ENCODE measurements at regions of chr7 and their contacts with region 1.

Region 1: GRCh38 chr7:105656903-105657521 is 75.7 kb upstream of the EFCAB10 start:
- DNase-seq: peak; percentile 37 to 84 (median 66)
- ATAC-seq: peak; percentile 50 to 76 (median 60)
- H3K4me3 ChIP-seq: no peak overlapping the region
- H3K4me3 Mint-ChIP-seq: no peak overlapping the region
- H3K27ac ChIP-seq: no peak overlapping the region
- H3K27ac Mint-ChIP-seq: no peak overlapping the region
- H3K4me1 ChIP-seq: no peaks in the 10 kb centered on the region
- H3K4me1 Mint-ChIP-seq: peaks cover 6 to 12% (median 7%) of the 10 kb centered on the region in 3 donors
- H3K27me3 ChIP-seq: no peaks in the 10 kb centered on the region
- H3K27me3 Mint-ChIP-seq: no peaks in the 10 kb centered on the region

Region 2: DNA sequence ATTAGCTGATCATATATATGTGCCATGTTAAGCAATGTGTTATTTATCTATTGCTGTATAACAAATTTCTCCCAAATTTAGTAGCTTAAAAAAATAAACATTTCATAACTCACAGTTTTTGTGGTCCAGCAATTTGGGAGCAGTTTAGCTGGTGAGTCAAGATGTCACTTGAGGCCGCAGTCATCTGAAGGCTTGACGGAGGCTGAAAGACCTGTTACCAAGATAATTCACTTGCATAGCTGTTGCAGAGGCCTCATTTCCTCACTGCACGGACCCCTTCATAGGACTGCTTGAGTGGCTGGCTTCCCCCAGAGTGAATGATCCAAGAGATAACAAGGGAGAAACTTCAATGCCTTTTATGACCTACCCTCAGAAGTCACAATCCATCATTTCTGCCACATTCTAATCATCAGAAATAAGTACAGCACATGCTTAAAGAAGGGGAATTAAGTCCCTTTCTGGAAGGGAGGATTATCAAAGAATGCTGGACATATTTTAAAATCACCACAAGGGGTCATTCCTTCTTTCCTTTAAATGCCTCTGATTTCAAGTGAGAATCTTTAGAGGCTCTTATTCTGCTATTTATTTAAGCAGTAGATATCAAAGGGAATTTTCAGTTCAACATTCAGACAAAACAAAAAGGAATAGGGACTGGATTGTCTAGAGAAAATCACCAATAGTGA is 257.8 kb before region 1 on chr7:
- CTCF ChIA-PET with region 1: no interaction called
- POLR2A ChIA-PET with region 1: no interaction called
- DNase-seq: no peak
- ATAC-seq: no peak
- H3K4me3 ChIP-seq: no peak overlapping the region
- H3K4me3 Mint-ChIP-seq: no peak overlapping the region
- H3K27ac ChIP-seq: no peak overlapping the region
- H3K27ac Mint-ChIP-seq: no peak overlapping the region
- H3K4me1 ChIP-seq: no peaks in the 10 kb centered on the region
- H3K4me1 Mint-ChIP-seq: peaks cover 2 to 6% (median 3%) of the 10 kb centered on the region in 3 donors
- H3K27me3 ChIP-seq: no peaks in the 10 kb centered on the region
- H3K27me3 Mint-ChIP-seq: no peaks in the 10 kb centered on the region

Region 3: DNA sequence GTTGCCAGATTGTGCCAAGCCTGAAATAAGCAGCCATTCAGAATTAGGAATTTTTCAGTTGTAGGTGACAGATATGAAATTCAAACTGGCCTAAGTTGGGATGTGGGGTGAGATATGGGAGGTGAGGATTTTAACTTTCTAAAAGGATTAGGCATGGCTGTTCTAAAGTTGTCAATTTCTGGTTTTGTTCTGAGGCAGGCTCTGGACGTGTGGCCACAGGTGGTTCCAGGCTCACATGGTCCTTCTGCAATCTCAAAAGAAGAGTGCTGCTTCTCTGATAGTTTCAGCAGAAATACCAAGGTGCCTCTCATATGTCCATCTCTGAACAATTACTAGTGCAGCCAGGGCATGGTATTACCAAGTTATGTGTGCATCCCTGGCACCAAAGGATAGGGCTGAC is 97.1 kb before region 1 on chr7:
- CTCF ChIA-PET with region 1: no interaction called
- POLR2A ChIA-PET with region 1: no interaction called
- DNase-seq: no peak
- ATAC-seq: no peak
- H3K4me3 ChIP-seq: no peak overlapping the region
- H3K4me3 Mint-ChIP-seq: no peak overlapping the region
- H3K27ac ChIP-seq: no peak overlapping the region
- H3K27ac Mint-ChIP-seq: no peak overlapping the region
- H3K4me1 ChIP-seq: no peaks in the 10 kb centered on the region
- H3K4me1 Mint-ChIP-seq: no peaks in the 10 kb centered on the region
- H3K27me3 ChIP-seq: no peaks in the 10 kb centered on the region
- H3K27me3 Mint-ChIP-seq: no peaks in the 10 kb centered on the region

Region 4: GRCh38 chr7:105691733-105692564 is 34.9 kb after region 1 on chr7:
- CTCF ChIA-PET with region 1: interaction called in 1 of 2 experiments, 4 read pairs
- POLR2A ChIA-PET with region 1: interaction called in 1 of 2 experiments, 16 read pairs
- DNase-seq: peak; percentile 36 to 93 (median 86)
- ATAC-seq: peak; percentile 64 to 86 (median 74)
- H3K4me3 ChIP-seq: peak overlapping the region; percentile 78 to 86
- H3K4me3 Mint-ChIP-seq: peak overlapping the region; percentile 92 to 97 (median 96)
- H3K27ac ChIP-seq: peak overlapping the region; percentile 98
- H3K27ac Mint-ChIP-seq: peak overlapping the region; percentile 99 to 100
- H3K4me1 ChIP-seq: peaks cover 2 to 41% of the 10 kb centered on the region in 2 experiments
- H3K4me1 Mint-ChIP-seq: peaks cover 64 to 71% (median 68%) of the 10 kb centered on the region in 3 donors
- H3K27me3 ChIP-seq: no peaks in the 10 kb centered on the region
- H3K27me3 Mint-ChIP-seq: no peaks in the 10 kb centered on the region

Region 5: GRCh38 chr7:105759670-105760550 is 102.9 kb after region 1 on chr7:
- CTCF ChIA-PET with region 1: interaction called, 5 to 14 read pairs
- POLR2A ChIA-PET with region 1: no interaction called
- DNase-seq: peak in 8 of 35 experiments; percentile 3 to 52 (median 10)
- ATAC-seq: peak; percentile 10 to 31 (median 21)
- H3K4me3 ChIP-seq: no peak overlapping the region
- H3K4me3 Mint-ChIP-seq: peak overlapping the region in 2 of 3 donors; percentile 31 to 43
- H3K27ac ChIP-seq: no peak overlapping the region
- H3K27ac Mint-ChIP-seq: peak overlapping the region; percentile 84 to 86
- H3K4me1 ChIP-seq: peaks cover 26 to 30% of the 10 kb centered on the region in 2 experiments
- H3K4me1 Mint-ChIP-seq: peaks cover 34 to 45% (median 43%) of the 10 kb centered on the region in 3 donors
- H3K27me3 ChIP-seq: no peaks in the 10 kb centered on the region
- H3K27me3 Mint-ChIP-seq: no peaks in the 10 kb centered on the region

Region 6: DNA sequence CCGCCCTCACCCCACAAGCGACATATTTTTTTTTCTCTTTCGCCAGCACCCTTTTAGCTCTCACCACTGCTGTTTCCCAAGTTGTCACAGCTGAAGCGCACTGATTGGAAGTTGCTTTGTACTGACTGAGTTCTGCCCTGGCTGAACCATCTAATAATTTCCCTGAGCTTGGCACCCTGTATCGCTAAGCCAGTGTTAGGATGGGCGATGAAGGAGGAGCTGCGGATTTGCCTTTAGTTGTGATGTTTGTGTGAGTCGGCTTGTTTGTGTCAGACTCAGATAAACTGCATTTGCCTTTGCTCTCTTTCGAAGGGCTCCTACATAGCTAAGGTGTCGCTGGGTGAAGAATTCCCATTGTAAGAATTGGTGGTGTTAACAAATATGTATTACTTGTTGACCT is 220.7 kb after region 1 on chr7:
- CTCF ChIA-PET with region 1: interaction called, 4 to 12 read pairs
- POLR2A ChIA-PET with region 1: interaction called in 1 of 2 experiments, 7 read pairs
- DNase-seq: peak in 1 of 35 experiments; percentile 9
- ATAC-seq: no peak
- H3K4me3 ChIP-seq: peak overlapping the region; percentile 80 to 88
- H3K4me3 Mint-ChIP-seq: peak overlapping the region; percentile 86 to 91 (median 88)
- H3K27ac ChIP-seq: no peak overlapping the region
- H3K27ac Mint-ChIP-seq: peak overlapping the region; percentile 10 to 72
- H3K4me1 ChIP-seq: peaks cover 19 to 45% of the 10 kb centered on the region in 2 experiments
- H3K4me1 Mint-ChIP-seq: peaks cover 64 to 72% (median 66%) of the 10 kb centered on the region in 3 donors
- H3K27me3 ChIP-seq: no peaks in the 10 kb centered on the region
- H3K27me3 Mint-ChIP-seq: no peaks in the 10 kb centered on the region

Region 7: GRCh38 chr7:106041140-106041717 is 384.2 kb after region 1 on chr7:
- CTCF ChIA-PET with region 1: interaction called, 5 to 35 read pairs
- POLR2A ChIA-PET with region 1: no interaction called
- DNase-seq: peak in 9 of 35 experiments; percentile 7 to 55 (median 31)
- ATAC-seq: peak in 3 of 4 experiments; percentile 22 to 32 (median 29)
- H3K4me3 ChIP-seq: no peak overlapping the region
- H3K4me3 Mint-ChIP-seq: peak overlapping the region in 1 of 3 donors; percentile 57
- H3K27ac ChIP-seq: no peak overlapping the region
- H3K27ac Mint-ChIP-seq: peak overlapping the region; percentile 40 to 69
- H3K4me1 ChIP-seq: peaks cover 13 to 33% of the 10 kb centered on the region in 2 experiments
- H3K4me1 Mint-ChIP-seq: peaks cover 36 to 51% (median 39%) of the 10 kb centered on the region in 3 donors
- H3K27me3 ChIP-seq: peaks cover 0 to 16% of the 10 kb centered on the region in 2 experiments
- H3K27me3 Mint-ChIP-seq: peaks cover 0 to 2% of the 10 kb centered on the region in 2 donors